SK-MEL-5 (cell line): ENCODE measurements at regions of chr11 and their contacts with region 1.

Region 1: GRCh38 chr11:130894322-130895025 is 21.8 kb downstream of the SNX19 start:
- DNase-seq: peak; percentile 64

Region 2: GRCh38 chr11:130434521-130435223 is 459.8 kb before region 1 on chr11:
- in situ Hi-C with region 1: loop called (anchors 25 kb)
- DNase-seq: peak; percentile 81

Region 3: GRCh38 chr11:131025020-131025419 is 130.5 kb after region 1 on chr11:
- in situ Hi-C with region 1: no loop called
- DNase-seq: peak; percentile 20